Activated T-helper 2 cell treated with anti-CD3 and anti-CD28 coated beads, Interferon-gamma antibody, Interleukin-2, Interleukin-4, amounts not matched to agents 10 μg/mL and 5 μg/mL and 100 μg/mL, durations not matched to agents 14 hours and 24 hours and 36 hours (primary cell): ENCODE measurements at regions of chr5 and their contacts with region 1.

Region 1: GRCh38 chr5:51382763-51383490 is at the start of gene ISL1:
- DNase-seq: no peak
- H3K4me3 Mint-ChIP-seq: peak within 1 kb of the TSS; percentile 42
- H3K27ac Mint-ChIP-seq: no peak within 1 kb of the TSS
- H3K4me1 Mint-ChIP-seq: peaks cover 7% of the 10 kb centered on the region
- H3K27me3 Mint-ChIP-seq: peaks cover 97% of the 10 kb centered on the region
- total RNA-seq, gene ISL1: not detected in 2 replicates

Region 2: DNA sequence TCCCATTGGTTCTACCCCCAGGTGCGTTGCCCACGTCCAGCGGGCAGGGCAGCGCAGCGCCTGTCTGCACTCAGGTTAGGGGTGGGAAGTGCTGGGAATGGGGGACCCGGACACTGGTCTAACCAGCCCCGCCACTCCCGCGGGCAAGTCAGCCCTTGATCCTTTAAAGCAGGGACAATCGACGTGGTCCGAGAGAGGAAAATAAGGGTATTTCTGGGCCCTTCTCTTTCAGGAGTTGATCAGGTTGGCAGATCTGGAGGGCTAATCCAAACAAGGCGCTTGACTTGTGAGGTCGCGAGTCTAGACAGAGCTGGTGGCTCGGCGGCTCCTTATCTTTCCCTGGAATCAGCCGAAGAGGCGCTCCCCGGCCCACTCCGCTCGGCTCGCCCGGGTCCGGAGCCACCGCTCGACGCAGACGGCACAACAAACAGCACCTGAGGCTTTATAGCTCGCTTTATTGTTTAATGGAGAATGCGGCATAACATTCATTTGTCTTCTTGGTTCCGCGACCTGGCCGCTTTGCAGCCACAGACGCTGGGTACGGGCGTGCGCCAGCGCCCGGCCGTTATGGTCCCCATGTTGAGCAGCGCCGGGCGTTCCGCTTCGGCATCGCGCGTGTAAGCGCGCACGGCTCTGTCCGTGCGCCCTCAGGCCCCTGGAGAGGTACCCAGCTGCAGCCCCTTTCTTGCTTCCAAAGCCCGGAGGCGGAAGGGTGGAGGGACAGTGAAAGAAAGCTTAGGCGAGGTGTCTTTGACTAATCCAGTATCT is 16.1 kb after region 1 on chr5:
- intact Hi-C with region 1: loop called (anchors 2 kb)
- DNase-seq: no peak
- H3K4me3 Mint-ChIP-seq: no peak overlapping the region
- H3K27ac Mint-ChIP-seq: no peak overlapping the region
- H3K4me1 Mint-ChIP-seq: no peaks in the 10 kb centered on the region
- H3K27me3 Mint-ChIP-seq: peaks cover 44% of the 10 kb centered on the region

Region 3: DNA sequence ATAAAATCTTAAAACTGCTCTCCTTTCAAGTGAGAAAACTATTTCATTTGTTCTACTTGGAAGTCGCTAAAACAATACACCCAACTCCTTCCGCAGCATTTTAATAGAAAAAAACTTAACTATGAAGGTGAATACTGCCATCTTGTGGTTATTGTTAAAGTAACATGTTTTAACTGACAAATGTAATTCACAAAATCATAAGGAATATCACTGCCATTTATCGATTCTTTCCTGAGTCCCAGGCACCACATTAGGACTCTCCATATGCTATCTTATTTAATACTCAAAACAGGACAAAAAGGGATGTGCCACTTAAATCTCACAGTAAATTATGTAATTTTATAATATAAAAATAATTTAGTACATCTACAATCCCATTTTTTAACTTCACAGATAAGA is 1274.3 kb after region 1 on chr5:
- intact Hi-C with region 1: loop called (anchors 2 kb)
- DNase-seq: no peak
- H3K4me3 Mint-ChIP-seq: no peak overlapping the region
- H3K27ac Mint-ChIP-seq: no peak overlapping the region
- H3K4me1 Mint-ChIP-seq: no peaks in the 10 kb centered on the region
- H3K27me3 Mint-ChIP-seq: peaks cover 29% of the 10 kb centered on the region